ENCODE measurements at regions of chr2 and their contacts with region 1.

Region 1: GRCh38 chr2:135709992-135710391 is 31.7 kb upstream of the UBXN4 start:
- DNase-seq: peak; percentile 42 to 80 (median 68)
- H3K4me3 ChIP-seq: no peak overlapping the region
- H3K27ac ChIP-seq: peak overlapping the region in 7 of 59 donors; percentile 8 to 50 (median 25)
- H3K27me3 ChIP-seq: no peaks in the 10 kb centered on the region
- CTCF ChIP-seq: peak; percentile 88 to 100 (median 98)

Region 2: GRCh38 chr2:135004005-135004746 is 705.8 kb before region 1 on chr2:
- intact Hi-C with region 1: loop called (anchors 1 to 10 kb)
- DNase-seq: peak; percentile 62 to 85 (median 75)
- H3K4me3 ChIP-seq: peak overlapping the region in 7 of 59 donors; percentile 19 to 36 (median 25)
- H3K27ac ChIP-seq: no peak overlapping the region
- H3K27me3 ChIP-seq: peaks cover 0 to 6% (median 0%) of the 10 kb centered on the region in 45 donors
- CTCF ChIP-seq: peak; percentile 54 to 99 (median 90)

Region 3: DNA sequence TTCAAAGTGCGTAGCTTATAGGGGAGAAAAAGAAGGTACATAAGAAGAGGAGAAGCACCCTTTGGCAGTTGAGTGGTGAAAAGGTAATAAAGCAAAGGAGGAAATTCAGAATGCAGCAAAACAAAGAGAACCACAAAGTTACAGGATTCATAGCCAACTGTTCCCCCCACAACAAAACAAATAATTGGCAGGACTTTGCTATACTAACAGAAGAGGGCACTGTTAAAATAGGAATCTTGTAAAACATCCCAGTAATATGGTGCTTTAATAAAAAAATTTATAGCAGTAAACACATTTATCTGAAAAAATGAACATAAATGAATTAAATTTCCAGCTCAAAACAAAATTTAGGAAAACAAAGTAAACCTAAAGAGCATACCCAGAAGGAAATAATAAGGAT is 136.4 kb before region 1 on chr2:
- intact Hi-C with region 1: loop called in 1 of 2 experiments (anchors 5 kb)
- DNase-seq: no peak
- H3K4me3 ChIP-seq: no peak overlapping the region
- H3K27ac ChIP-seq: no peak overlapping the region
- H3K27me3 ChIP-seq: no peaks in the 10 kb centered on the region
- CTCF ChIP-seq: peak in 29 of 56 donors; percentile 12 to 60 (median 30)

Measured in dorsolateral prefrontal cortex (tissue), 120 donors.